Mammary epithelial cell (primary cell): ENCODE measurements at regions of chr19 and their contacts with region 1.

Region 1: DNA sequence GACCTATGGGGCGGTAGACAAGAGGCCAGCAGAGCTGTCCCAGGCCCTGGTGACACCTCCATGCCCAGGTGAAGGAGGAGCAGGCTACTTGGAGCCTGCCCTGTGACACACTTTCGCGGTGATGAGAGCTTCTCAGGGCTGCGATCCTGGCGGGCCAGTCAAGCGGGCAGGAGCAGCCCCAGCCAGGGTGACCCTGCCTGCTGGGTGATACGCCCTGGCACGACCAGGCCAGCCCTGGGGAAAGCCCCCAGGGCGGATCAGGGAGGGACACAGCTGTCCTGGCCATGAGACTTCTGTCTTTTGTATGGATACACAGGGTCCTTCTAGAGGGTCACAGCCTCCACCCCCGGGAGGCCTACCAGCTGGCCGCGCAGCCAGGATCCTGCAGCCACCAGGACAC is 13.0 kb downstream of the DNM2 start:
- DNase-seq: no peak
- H3K4me3 ChIP-seq: no peak overlapping the region
- H3K27ac ChIP-seq: no peak overlapping the region
- H3K4me1 ChIP-seq: no peaks in the 10 kb centered on the region
- H3K27me3 ChIP-seq: no peaks in the 10 kb centered on the region
- CTCF ChIP-seq: no peak

Region 2: GRCh38 chr19:10769533-10770491 is 38.9 kb after region 1 on chr19:
- CTCF ChIA-PET with region 1: no interaction called
- dilution Hi-C with region 1: no loop called
- in situ Hi-C with region 1: no loop called
- intact Hi-C with region 1: no loop called
- DNase-seq: no peak
- H3K4me3 ChIP-seq: no peak overlapping the region
- H3K27ac ChIP-seq: no peak overlapping the region
- H3K4me1 ChIP-seq: peaks cover 5% of the 10 kb centered on the region
- H3K27me3 ChIP-seq: no peaks in the 10 kb centered on the region
- CTCF ChIP-seq: no peak

Region 3: GRCh38 chr19:10808937-10809652 is 78.2 kb after region 1 on chr19:
- CTCF ChIA-PET with region 1: no interaction called
- dilution Hi-C with region 1: loop called (anchors 5 kb)
- in situ Hi-C with region 1: no loop called
- intact Hi-C with region 1: no loop called
- DNase-seq: peak; percentile 72
- H3K4me3 ChIP-seq: no peak overlapping the region
- H3K27ac ChIP-seq: peak overlapping the region; percentile 2
- H3K4me1 ChIP-seq: peaks cover 21% of the 10 kb centered on the region
- H3K27me3 ChIP-seq: no peaks in the 10 kb centered on the region
- CTCF ChIP-seq: no peak

Region 4: DNA sequence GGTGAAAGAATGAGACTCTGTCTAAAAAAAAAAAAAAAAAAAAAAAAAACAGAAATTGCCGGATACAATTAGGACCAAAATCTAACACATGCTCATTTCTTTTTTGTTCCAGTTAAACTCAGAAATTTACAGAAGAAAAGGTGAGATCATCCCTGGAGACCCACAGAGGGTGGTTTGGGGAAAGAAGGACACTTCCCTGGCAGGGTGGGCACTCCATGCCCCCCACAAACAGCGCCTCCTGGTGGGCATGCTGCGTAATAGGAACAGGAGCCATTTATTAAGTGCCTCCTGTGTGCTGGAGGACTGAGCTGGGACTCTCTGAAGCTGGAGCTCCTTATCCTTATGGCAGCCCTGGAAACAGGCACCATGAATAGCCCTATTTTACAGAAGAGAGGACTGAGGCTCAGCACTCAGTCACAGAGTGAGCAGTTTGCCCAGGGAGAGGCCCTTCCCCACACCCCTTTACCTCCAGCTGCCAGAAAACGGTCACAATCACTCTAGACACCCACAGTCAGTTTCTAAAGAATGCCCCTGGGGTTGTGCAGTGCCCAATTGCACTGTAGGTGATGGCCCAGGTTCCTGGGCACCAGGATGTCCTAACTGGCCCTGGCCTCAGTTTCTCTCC is 127.4 kb after region 1 on chr19:
- CTCF ChIA-PET with region 1: interaction called, 32 read pairs
- dilution Hi-C with region 1: no loop called
- in situ Hi-C with region 1: no loop called
- intact Hi-C with region 1: no loop called
- DNase-seq: no peak
- H3K4me3 ChIP-seq: no peak overlapping the region
- H3K27ac ChIP-seq: no peak overlapping the region
- H3K4me1 ChIP-seq: no peaks in the 10 kb centered on the region
- H3K27me3 ChIP-seq: no peaks in the 10 kb centered on the region
- CTCF ChIP-seq: peak; percentile 69 to 76

Region 5: GRCh38 chr19:11035441-11036377 is 304.8 kb after region 1 on chr19:
- CTCF ChIA-PET with region 1: interaction called, 17 read pairs
- dilution Hi-C with region 1: no loop called
- in situ Hi-C with region 1: no loop called
- intact Hi-C with region 1: no loop called
- DNase-seq: peak; percentile 80
- H3K4me3 ChIP-seq: no peak overlapping the region
- H3K27ac ChIP-seq: no peak overlapping the region
- H3K4me1 ChIP-seq: peaks cover 13% of the 10 kb centered on the region
- H3K27me3 ChIP-seq: no peaks in the 10 kb centered on the region
- CTCF ChIP-seq: peak; percentile 88 to 98